ENCODE measurements at regions of chr3 and their contacts with region 1.

Region 1: DNA sequence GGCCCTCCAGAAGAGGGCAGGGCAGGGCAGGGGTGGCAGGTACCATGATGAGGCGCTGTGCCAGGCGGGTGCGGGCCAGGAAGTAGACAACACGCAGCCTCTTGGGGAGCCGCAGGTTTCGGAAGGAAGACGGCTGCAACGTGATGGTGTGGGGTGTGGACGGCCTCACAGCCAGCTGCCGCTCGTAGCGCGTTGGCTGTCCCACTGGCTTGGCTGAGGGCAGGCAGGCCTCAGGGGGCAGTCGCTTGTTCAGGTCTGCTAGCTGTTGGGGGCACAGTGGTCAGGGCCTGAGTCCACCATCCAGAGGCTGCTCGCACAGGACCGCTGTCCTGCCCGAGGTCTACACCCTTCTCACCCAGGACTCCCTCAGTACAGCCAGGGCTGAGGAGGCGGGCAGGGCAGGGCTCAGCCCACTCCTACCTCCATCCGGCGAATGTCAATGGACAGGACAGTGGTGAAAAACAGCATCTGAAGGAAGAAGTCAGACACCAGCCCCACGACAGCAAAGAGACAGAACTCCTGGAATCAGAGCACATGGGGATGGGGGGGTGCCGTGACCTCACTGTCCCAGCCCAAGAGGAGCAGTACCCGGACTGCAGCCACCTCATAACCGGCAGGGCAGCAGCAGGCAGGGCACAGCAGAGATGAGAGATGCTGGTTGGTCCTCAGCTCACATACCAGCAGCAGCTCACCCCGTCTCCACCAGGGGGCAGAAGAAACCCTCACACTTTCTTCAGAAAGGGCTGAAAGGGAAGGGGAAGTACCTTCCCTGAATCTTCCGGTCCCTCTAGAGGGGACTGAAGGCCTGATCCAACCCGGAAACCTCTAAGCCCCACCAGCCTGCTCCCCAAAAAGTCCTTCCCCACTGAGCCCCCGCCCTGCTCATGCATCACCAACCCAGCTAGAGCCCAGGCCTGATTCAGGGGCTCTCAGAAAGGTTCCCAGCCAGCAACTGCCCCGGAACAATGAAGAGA is 40.0 kb downstream of the PTPN23 start:
- DNase-seq: peak; percentile 88
- ATAC-seq: peak; percentile 92
- H3K4me3 Mint-ChIP-seq: peak overlapping the region; percentile 85
- H3K27ac Mint-ChIP-seq: peak overlapping the region; percentile 100
- H3K4me1 Mint-ChIP-seq: peaks cover 14% of the 10 kb centered on the region
- H3K27me3 Mint-ChIP-seq: no peaks in the 10 kb centered on the region

Region 2: DNA sequence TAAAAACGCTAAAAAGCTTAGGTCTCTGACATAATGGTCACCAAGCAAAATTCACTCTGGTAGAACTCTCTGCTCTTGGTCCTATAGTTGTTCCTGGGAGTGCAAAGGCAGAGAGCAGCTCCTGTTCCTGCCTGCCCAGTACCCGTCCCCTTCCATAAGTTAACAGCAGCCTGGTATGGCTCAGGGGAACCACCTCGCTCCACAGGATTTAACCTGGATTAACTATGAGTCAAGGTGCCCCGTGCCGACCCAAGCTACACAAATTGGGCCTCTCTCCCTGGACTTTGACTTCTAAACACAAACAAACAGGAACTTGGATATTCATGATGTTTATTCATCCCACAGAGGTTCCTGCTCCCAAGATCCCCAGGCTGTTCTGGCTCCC is 22.8 kb after region 1 on chr3:
- POLR2A ChIA-PET with region 1: no interaction called
- DNase-seq: no peak
- ATAC-seq: no peak
- H3K4me3 Mint-ChIP-seq: no peak overlapping the region
- H3K27ac Mint-ChIP-seq: no peak overlapping the region
- H3K4me1 Mint-ChIP-seq: peaks cover 1% of the 10 kb centered on the region
- H3K27me3 Mint-ChIP-seq: no peaks in the 10 kb centered on the region

Region 3: GRCh38 chr3:47475570-47476329 is 55.0 kb after region 1 on chr3 and contains the start of gene SCAP:
- POLR2A ChIA-PET with region 1: interaction called, 28 read pairs
- DNase-seq: peak; percentile 98
- ATAC-seq: peak; percentile 91
- H3K4me3 Mint-ChIP-seq: peak within 1 kb of the TSS; percentile 91
- H3K27ac Mint-ChIP-seq: peak within 1 kb of the TSS; percentile 90
- H3K4me1 Mint-ChIP-seq: peaks cover 20% of the 10 kb centered on the region
- H3K27me3 Mint-ChIP-seq: no peaks in the 10 kb centered on the region
- total RNA-seq, gene SCAP: 73.5 to 80.1 TPM

Region 4: GRCh38 chr3:47485812-47486211 is 65.0 kb after region 1 on chr3:
- POLR2A ChIA-PET with region 1: no interaction called
- DNase-seq: no peak
- ATAC-seq: no peak
- H3K4me3 Mint-ChIP-seq: no peak overlapping the region
- H3K27ac Mint-ChIP-seq: no peak overlapping the region
- H3K4me1 Mint-ChIP-seq: no peaks in the 10 kb centered on the region
- H3K27me3 Mint-ChIP-seq: no peaks in the 10 kb centered on the region

Region 5: GRCh38 chr3:47513125-47513929 is 92.5 kb after region 1 on chr3 and contains the start of gene ELP6:
- POLR2A ChIA-PET with region 1: interaction called, 17 read pairs
- DNase-seq: peak; percentile 97
- ATAC-seq: peak; percentile 94
- H3K4me3 Mint-ChIP-seq: peak within 1 kb of the TSS; percentile 97
- H3K27ac Mint-ChIP-seq: peak within 1 kb of the TSS; percentile 98
- H3K4me1 Mint-ChIP-seq: peaks cover 14% of the 10 kb centered on the region
- H3K27me3 Mint-ChIP-seq: peaks cover 9% of the 10 kb centered on the region
- total RNA-seq, gene ELP6: 36.8 to 39.8 TPM

Measured in activated naive CD8-positive, alpha-beta T cell treated with anti-CD3 and anti-CD28 coated beads, Interleukin-2, amount 10 ng/mL, durations not matched to agents 7 days and 5 days (primary cell).